Calu3 (cell line): ENCODE measurements at regions of chr11 and their contacts with region 1.

Region 1: GRCh38 chr11:37786214-37786755 is 1188.2 kb upstream of the RAG2 start:
- DNase-seq: no peak
- H3K4me3 Mint-ChIP-seq: no peak overlapping the region
- H3K27ac Mint-ChIP-seq: no peak overlapping the region
- H3K4me1 Mint-ChIP-seq: peaks cover 20% of the 10 kb centered on the region
- H3K27me3 Mint-ChIP-seq: no peaks in the 10 kb centered on the region
- CTCF ChIP-seq: no peak

Region 2: GRCh38 chr11:37689951-37690350 is 96.3 kb before region 1 on chr11:
- CTCF ChIA-PET with region 1: no interaction called
- intact Hi-C with region 1: no loop called
- DNase-seq: no peak
- H3K4me3 Mint-ChIP-seq: no peak overlapping the region
- H3K27ac Mint-ChIP-seq: no peak overlapping the region
- H3K4me1 Mint-ChIP-seq: no peaks in the 10 kb centered on the region
- H3K27me3 Mint-ChIP-seq: no peaks in the 10 kb centered on the region
- CTCF ChIP-seq: no peak

Region 3: DNA sequence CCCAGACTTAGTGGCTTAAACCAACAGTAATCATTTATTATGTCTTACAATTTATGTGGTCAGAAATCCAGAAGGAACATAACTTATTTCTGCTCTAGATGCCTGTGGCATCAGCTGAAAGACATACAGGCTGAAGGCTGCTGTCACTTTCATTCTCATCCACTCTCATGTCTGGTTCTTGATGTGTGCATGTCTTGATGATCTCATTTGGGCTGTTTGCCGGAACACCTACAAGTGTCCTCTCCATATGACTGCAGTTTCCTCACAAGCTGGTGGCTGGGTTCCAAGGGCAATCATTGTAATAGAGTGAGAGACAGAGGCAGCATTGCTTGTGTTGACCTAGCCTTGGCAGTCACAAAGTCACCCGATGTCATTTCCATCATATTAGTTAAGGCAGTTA is 187.7 kb after region 1 on chr11:
- CTCF ChIA-PET with region 1: no interaction called
- intact Hi-C with region 1: loop called (anchors 2 kb)
- DNase-seq: peak; percentile 24
- H3K4me3 Mint-ChIP-seq: peak overlapping the region; percentile 38
- H3K27ac Mint-ChIP-seq: peak overlapping the region; percentile 84
- H3K4me1 Mint-ChIP-seq: peaks cover 39% of the 10 kb centered on the region
- H3K27me3 Mint-ChIP-seq: no peaks in the 10 kb centered on the region
- CTCF ChIP-seq: no peak